ENCODE measurements at regions of chr11 and their contacts with region 1.

Region 1: GRCh38 chr11:10307442-10308207 is 2.8 kb downstream of the ADM start:
- DNase-seq: peak; percentile 86
- ATAC-seq: peak; percentile 21
- H3K4me3 ChIP-seq: peak overlapping the region; percentile 93
- H3K27ac ChIP-seq: peak overlapping the region; percentile 89
- H3K4me1 ChIP-seq: peaks cover 21% of the 10 kb centered on the region
- H3K27me3 ChIP-seq: no peaks in the 10 kb centered on the region
- CTCF ChIP-seq: peak; percentile 98

Region 2: GRCh38 chr11:9613118-9613829 is 694.4 kb before region 1 on chr11:
- CTCF ChIA-PET with region 1: no interaction called
- POLR2A ChIA-PET with region 1: no interaction called
- intact Hi-C with region 1: loop called (anchors 5 kb)
- DNase-seq: peak; percentile 96
- ATAC-seq: peak; percentile 80
- H3K4me3 ChIP-seq: peak overlapping the region; percentile 63
- H3K27ac ChIP-seq: peak overlapping the region; percentile 86
- H3K4me1 ChIP-seq: peaks cover 26% of the 10 kb centered on the region
- H3K27me3 ChIP-seq: no peaks in the 10 kb centered on the region
- CTCF ChIP-seq: peak; percentile 91

Region 3: DNA sequence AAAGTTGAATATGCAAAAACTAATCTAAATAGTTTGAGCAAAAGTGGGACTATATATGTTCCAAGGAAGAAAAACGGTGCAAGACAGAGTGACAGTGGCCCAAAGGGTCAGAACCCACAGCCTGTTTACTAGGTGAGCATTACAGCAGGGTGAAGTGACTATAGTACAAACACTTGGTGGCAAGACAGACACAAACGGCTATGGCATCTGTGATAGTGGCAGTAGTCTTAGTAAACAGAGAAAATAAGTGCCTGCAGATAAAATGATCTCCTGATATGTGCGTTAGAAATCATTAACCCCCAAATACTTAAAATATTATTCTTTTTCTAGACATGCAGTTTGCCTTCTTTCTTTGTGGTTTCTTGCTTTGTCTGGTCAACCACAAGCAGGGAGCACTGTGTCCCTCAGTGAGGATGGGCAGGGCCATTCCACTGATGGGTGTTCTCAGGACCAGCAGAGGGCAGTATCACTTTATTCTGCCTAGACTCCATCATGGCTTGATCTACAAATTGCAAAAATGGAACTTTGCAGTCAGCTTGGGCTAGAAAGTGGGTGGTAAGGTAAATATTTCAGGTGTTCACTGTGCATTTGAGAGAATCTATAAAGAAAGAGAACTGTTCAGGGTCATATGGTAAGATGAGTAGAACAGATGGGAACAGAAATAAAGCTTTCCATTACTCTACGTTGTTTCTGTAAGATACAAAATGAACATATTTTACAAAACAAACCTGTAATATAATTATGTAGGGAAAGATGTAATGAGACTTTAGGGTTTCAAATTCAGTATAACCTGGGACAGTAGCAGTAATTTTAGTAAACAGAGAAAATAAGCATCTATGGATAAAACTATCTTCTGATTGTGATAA is 445.5 kb before region 1 on chr11:
- CTCF ChIA-PET with region 1: no interaction called
- POLR2A ChIA-PET with region 1: no interaction called
- intact Hi-C with region 1: loop called (anchors 5 kb)
- DNase-seq: peak; percentile 83
- ATAC-seq: peak; percentile 94
- H3K4me3 ChIP-seq: no peak overlapping the region
- H3K27ac ChIP-seq: no peak overlapping the region
- H3K4me1 ChIP-seq: peaks cover 19% of the 10 kb centered on the region
- H3K27me3 ChIP-seq: no peaks in the 10 kb centered on the region
- CTCF ChIP-seq: peak; percentile 90

Region 4: DNA sequence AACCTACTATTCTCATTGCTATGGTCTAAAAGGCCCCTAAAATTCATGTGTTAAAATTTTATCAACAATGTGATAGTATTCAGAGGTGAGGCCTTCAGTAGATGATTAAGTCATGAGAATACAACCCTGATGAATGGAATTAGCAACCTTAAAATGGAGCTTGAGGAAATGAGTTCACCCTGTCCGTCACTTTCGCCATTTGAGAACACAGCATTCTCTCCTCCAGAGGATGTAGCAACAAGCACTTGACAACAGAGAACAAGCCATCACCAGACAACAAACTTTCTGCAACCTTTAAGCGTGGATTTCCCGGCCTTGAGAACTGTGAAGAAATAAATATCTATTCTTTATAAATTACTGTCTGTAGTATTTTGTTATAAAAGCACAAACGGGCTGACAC is 210.6 kb before region 1 on chr11:
- CTCF ChIA-PET with region 1: no interaction called
- POLR2A ChIA-PET with region 1: no interaction called
- intact Hi-C with region 1: loop called (anchors 5 kb)
- DNase-seq: no peak
- ATAC-seq: no peak
- H3K4me3 ChIP-seq: no peak overlapping the region
- H3K27ac ChIP-seq: no peak overlapping the region
- H3K4me1 ChIP-seq: peaks cover 19% of the 10 kb centered on the region
- H3K27me3 ChIP-seq: no peaks in the 10 kb centered on the region
- CTCF ChIP-seq: no peak

Region 5: GRCh38 chr11:10208131-10208575 is 99.5 kb before region 1 on chr11:
- CTCF ChIA-PET with region 1: interaction called, 5 read pairs
- POLR2A ChIA-PET with region 1: interaction called, 17 read pairs
- intact Hi-C with region 1: loop called (anchors 1 kb)
- DNase-seq: peak; percentile 74
- ATAC-seq: peak; percentile 74
- H3K4me3 ChIP-seq: no peak overlapping the region
- H3K27ac ChIP-seq: no peak overlapping the region
- H3K4me1 ChIP-seq: no peaks in the 10 kb centered on the region
- H3K27me3 ChIP-seq: no peaks in the 10 kb centered on the region
- CTCF ChIP-seq: peak; percentile 72

Region 6: DNA sequence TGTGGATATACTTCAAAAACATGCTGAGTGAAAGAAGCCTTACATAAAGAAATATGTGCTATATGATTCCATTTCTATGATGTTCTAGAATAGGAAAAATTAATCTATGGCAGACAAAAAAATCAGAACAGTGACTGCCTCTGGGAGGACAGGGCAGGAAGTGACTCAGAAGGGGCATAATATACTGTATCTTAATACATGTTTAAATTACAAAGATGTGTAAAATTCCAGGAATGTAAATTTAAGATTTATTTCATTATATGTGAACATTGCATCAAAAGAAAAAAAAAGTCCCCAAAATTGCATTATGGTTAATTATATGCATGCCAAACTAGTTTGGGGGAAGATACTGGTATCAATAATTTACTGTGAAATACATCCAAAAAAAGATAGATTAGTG is 45.8 kb before region 1 on chr11:
- CTCF ChIA-PET with region 1: no interaction called
- POLR2A ChIA-PET with region 1: no interaction called
- intact Hi-C with region 1: no loop called
- DNase-seq: peak; percentile 25
- ATAC-seq: no peak; the same call in 1 of the 2 replicates
- H3K4me3 ChIP-seq: no peak overlapping the region
- H3K27ac ChIP-seq: no peak overlapping the region
- H3K4me1 ChIP-seq: peaks cover 9% of the 10 kb centered on the region
- H3K27me3 ChIP-seq: no peaks in the 10 kb centered on the region
- CTCF ChIP-seq: no peak

Region 7: GRCh38 chr11:10322830-10323792 is 15.5 kb after region 1 on chr11:
- CTCF ChIA-PET with region 1: interaction called, 3 read pairs
- POLR2A ChIA-PET with region 1: no interaction called
- intact Hi-C with region 1: loop called (anchors 2 kb)
- DNase-seq: peak; percentile 93
- ATAC-seq: peak; percentile 71
- H3K4me3 ChIP-seq: peak overlapping the region; percentile 15; the same call in 1 of the 2 replicates
- H3K27ac ChIP-seq: peak overlapping the region; percentile 29
- H3K4me1 ChIP-seq: peaks cover 43% of the 10 kb centered on the region
- H3K27me3 ChIP-seq: no peaks in the 10 kb centered on the region
- CTCF ChIP-seq: peak; percentile 72